Heart left ventricle (tissue), 16 donors: ENCODE measurements at regions of chr3 and their contacts with region 1.

Region 1: DNA sequence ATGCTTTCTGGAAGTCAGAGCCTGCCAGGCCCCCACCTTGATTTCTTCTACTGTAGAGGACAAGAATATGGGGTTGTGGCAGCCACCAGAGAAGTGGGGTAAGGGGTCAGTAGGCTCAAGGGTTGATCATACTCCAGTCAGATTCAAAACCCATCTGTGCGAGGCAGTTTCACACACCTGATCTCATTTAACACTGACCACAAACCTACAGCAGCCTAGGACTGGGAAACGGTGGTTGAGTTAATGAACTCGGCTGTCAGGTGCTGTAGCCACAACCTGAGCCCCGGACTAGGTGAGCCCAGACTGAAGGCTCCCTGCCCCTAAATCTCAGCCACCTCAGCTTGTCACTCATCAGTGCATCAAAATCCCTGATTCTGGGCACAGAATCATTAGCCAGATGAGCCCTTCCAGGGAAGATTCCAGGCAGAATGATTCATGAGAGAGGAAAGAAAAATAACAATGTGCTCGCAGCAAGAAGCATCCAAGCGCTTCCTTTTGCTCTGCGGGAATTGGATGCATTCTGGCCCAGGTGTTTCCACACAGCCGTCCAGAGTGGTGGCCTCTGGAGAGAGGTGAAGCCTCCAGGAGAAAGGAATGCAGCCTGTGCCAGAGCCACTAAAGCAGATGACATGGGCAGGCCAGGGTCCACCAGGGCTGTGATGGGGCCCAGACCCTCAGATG is 102.1 kb downstream of the SRGAP3 start:
- DNase-seq: no peak
- ATAC-seq: no peak
- H3K4me3 ChIP-seq: no peak overlapping the region
- H3K27ac ChIP-seq: no peak overlapping the region
- H3K4me1 ChIP-seq: peaks cover 0 to 14% (median 0%) of the 10 kb centered on the region in 12 donors
- H3K27me3 ChIP-seq: no peaks in the 10 kb centered on the region
- CTCF ChIP-seq: no peak
- POLR2A ChIP-seq: no peak

Region 2: DNA sequence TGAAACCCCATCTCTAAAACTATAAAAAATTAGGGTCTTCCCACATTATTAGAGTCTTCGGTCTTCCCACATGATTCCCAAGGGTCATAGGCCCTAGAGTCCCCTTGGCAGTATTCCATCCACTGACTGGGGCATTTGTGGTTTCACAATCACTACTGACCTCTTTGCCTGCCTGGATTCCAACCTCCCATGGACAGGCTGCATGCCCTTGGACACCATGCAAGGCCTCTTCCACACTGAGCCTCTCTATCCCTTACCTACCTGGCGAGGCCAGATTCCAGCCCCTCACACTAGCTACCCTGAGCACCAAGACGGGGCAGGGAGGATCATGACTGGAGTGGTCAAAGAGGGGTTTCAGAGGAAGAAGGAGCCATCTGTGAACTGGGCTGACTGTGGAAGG is 37.7 kb after region 1 on chr3:
- intact Hi-C with region 1: loop called in 1 of 10 experiments (anchors 5 kb)
- DNase-seq: no peak
- ATAC-seq: no peak
- H3K4me3 ChIP-seq: no peak overlapping the region
- H3K27ac ChIP-seq: no peak overlapping the region
- H3K4me1 ChIP-seq: peaks cover 0 to 18% (median 2%) of the 10 kb centered on the region in 12 donors
- H3K27me3 ChIP-seq: no peaks in the 10 kb centered on the region
- CTCF ChIP-seq: no peak
- POLR2A ChIP-seq: no peak